ENCODE measurements at regions of chr5 and their contacts with region 1.

Region 1: GRCh38 chr5:128074171-128074570 is 9.4 kb upstream of the SLC12A2 start:
- DNase-seq: no peak
- H3K4me3 ChIP-seq: no peak overlapping the region
- H3K27ac ChIP-seq: no peak overlapping the region
- H3K4me1 ChIP-seq: peaks cover 9% of the 10 kb centered on the region
- H3K27me3 ChIP-seq: no peaks in the 10 kb centered on the region
- CTCF ChIP-seq: no peak

Region 2: DNA sequence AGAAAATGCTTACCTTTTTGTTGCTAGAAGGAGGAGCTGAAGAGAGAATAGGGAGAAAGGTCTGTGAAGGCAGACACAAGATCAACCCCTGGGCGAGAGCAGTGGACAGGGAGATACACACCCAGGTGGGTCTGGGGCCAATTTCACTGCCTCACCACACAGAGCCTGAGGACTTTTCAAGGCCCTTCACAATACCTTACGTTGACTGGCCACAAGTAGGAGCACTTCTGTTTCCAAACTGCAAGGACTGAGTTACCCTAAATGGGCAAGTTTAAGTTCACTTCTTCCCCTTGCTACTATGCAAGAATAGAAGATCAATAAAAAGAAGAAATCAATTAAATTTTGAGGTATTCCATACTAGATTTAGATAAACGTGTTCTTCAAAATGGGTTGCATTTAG is 165.1 kb before region 1 on chr5:
- CTCF ChIA-PET with region 1: interaction called, 21 read pairs
- POLR2A ChIA-PET with region 1: no interaction called
- intact Hi-C with region 1: no loop called
- DNase-seq: peak in 1 of 2 experiments; percentile 51
- H3K4me3 ChIP-seq: no peak overlapping the region
- H3K27ac ChIP-seq: no peak overlapping the region
- H3K4me1 ChIP-seq: no peaks in the 10 kb centered on the region
- H3K27me3 ChIP-seq: no peaks in the 10 kb centered on the region
- CTCF ChIP-seq: peak; percentile 66

Region 3: GRCh38 chr5:128674825-128675446 is 600.8 kb after region 1 on chr5:
- CTCF ChIA-PET with region 1: no interaction called
- POLR2A ChIA-PET with region 1: interaction called, 38 read pairs
- intact Hi-C with region 1: no loop called
- DNase-seq: peak in 1 of 2 experiments; percentile 37
- H3K4me3 ChIP-seq: no peak overlapping the region
- H3K27ac ChIP-seq: no peak overlapping the region
- H3K4me1 ChIP-seq: no peaks in the 10 kb centered on the region
- H3K27me3 ChIP-seq: no peaks in the 10 kb centered on the region
- CTCF ChIP-seq: peak; percentile 71